ENCODE measurements at regions of chr1 and their contacts with region 1.

Region 1: DNA sequence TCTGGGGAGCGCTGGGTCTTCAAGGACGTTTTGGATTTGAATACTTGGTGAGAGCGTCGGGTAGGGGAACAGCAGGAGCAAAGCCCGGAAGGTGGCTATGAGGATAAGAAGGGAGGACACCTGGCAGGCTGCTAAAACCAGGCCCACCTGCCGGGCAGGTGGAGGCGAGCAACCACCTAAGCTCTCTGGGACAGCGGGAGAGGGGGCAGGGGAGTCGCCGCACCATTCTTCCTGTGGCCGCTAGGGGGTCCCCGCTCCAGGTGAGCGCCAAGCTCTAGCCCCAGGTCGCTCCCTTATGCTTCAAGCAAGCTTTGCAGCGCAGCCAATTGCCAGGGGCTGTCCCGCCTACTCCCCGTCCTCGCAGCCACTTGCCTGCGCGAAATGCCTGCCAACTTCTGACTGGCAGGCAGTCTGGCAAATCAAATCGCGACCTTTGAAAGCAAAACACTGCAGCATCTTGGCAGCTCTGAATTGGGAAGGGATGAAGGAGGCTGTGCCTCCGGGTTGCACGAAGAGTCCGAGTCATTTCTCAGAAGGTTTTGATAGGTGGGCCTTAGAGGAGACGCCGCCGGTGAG is at the start of gene NIPAL3:
- DNase-seq: peak; percentile 91
- H3K4me3 ChIP-seq: peak within 1 kb of the TSS; percentile 66 to 91
- H3K27ac ChIP-seq: peak within 1 kb of the TSS in 1 of 2 experiments; percentile 82; a peak in 3 of 4 replicates
- H3K4me1 ChIP-seq: peaks cover 17 to 39% of the 10 kb centered on the region in 2 experiments
- H3K27me3 ChIP-seq: no peaks in the 10 kb centered on the region
- CTCF ChIP-seq: peak; percentile 66
- EP300 ChIP-seq: no peak
- RAD21 ChIP-seq: peak; percentile 58
- polyA plus RNA-seq, gene NIPAL3: 20.3 and 28.6 TPM in 2 replicates

Region 2: GRCh38 chr1:24362982-24363614 is 52.3 kb before region 1 on chr1:
- CTCF ChIA-PET with region 1: no interaction called
- POLR2A ChIA-PET with region 1: no interaction called
- DNase-seq: no peak
- H3K4me3 ChIP-seq: no peak overlapping the region
- H3K27ac ChIP-seq: peak overlapping the region in 1 of 2 experiments; percentile 46; a peak in 2 of 4 replicates
- H3K4me1 ChIP-seq: peaks cover 11 to 15% of the 10 kb centered on the region in 2 experiments
- H3K27me3 ChIP-seq: no peaks in the 10 kb centered on the region
- CTCF ChIP-seq: no peak
- EP300 ChIP-seq: no peak; a peak in 1 of 4 replicates
- RAD21 ChIP-seq: no peak

Region 3: GRCh38 chr1:24403806-24404205 is 11.6 kb before region 1 on chr1:
- CTCF ChIA-PET with region 1: interaction called, 18 read pairs
- POLR2A ChIA-PET with region 1: no interaction called
- DNase-seq: no peak
- H3K4me3 ChIP-seq: no peak overlapping the region
- H3K27ac ChIP-seq: no peak overlapping the region
- H3K4me1 ChIP-seq: no peaks in the 10 kb centered on the region
- H3K27me3 ChIP-seq: no peaks in the 10 kb centered on the region
- CTCF ChIP-seq: no peak
- EP300 ChIP-seq: no peak
- RAD21 ChIP-seq: no peak

Region 4: GRCh38 chr1:24426744-24427544 is 11.5 kb after region 1 on chr1:
- CTCF ChIA-PET with region 1: interaction called, 21 read pairs
- POLR2A ChIA-PET with region 1: no interaction called
- DNase-seq: no peak
- H3K4me3 ChIP-seq: no peak overlapping the region
- H3K27ac ChIP-seq: no peak overlapping the region
- H3K4me1 ChIP-seq: no peaks in the 10 kb centered on the region; a peak in 1 of 4 replicates
- H3K27me3 ChIP-seq: no peaks in the 10 kb centered on the region
- CTCF ChIP-seq: no peak
- EP300 ChIP-seq: no peak
- RAD21 ChIP-seq: no peak

Region 5: DNA sequence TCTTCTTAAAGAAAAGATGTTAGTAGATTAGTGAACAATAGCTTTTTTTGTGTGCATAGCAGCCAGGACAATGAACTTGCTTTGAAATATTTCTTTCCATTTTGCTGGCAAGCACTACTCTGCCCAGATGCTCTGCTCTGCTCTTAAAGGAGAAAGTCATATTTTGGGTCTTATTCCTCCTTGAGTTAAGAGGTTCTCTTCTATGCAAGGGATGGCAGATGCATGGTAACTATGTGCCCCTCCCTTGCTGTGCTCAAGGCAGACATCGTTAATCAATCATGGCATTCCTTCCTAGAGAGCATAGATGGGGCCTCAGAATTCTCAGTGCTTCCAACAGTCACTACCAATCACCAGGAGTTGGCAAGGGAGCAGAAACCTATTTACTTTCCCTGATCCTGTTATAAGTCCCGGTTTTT is 27.8 kb after region 1 on chr1:
- CTCF ChIA-PET with region 1: interaction called, 16 read pairs
- POLR2A ChIA-PET with region 1: no interaction called
- DNase-seq: no peak
- H3K4me3 ChIP-seq: no peak overlapping the region
- H3K27ac ChIP-seq: peak overlapping the region in 1 of 2 experiments; percentile 34; a peak in 2 of 4 replicates
- H3K4me1 ChIP-seq: peaks cover 0 to 14% of the 10 kb centered on the region in 2 experiments; a peak in 1 of 4 replicates
- H3K27me3 ChIP-seq: no peaks in the 10 kb centered on the region
- CTCF ChIP-seq: no peak
- EP300 ChIP-seq: no peak
- RAD21 ChIP-seq: no peak

Region 6: GRCh38 chr1:24526940-24527542 is 111.6 kb after region 1 on chr1:
- CTCF ChIA-PET with region 1: interaction called, 15 read pairs
- POLR2A ChIA-PET with region 1: no interaction called
- DNase-seq: peak; percentile 41
- H3K4me3 ChIP-seq: no peak overlapping the region; a peak in 1 of 4 replicates
- H3K27ac ChIP-seq: no peak overlapping the region
- H3K4me1 ChIP-seq: no peaks in the 10 kb centered on the region
- H3K27me3 ChIP-seq: no peaks in the 10 kb centered on the region
- CTCF ChIP-seq: peak; percentile 69
- EP300 ChIP-seq: no peak
- RAD21 ChIP-seq: peak; percentile 48